Dendritic cell treated with granulocyte-macrophage colony-stimulating factor and Interleukin-4, amounts not matched to agents 40 ng/mL and 50 ng/mL, for 4 days (primary cell): ENCODE measurements at regions of chr19 and their contacts with region 1.

Region 1: DNA sequence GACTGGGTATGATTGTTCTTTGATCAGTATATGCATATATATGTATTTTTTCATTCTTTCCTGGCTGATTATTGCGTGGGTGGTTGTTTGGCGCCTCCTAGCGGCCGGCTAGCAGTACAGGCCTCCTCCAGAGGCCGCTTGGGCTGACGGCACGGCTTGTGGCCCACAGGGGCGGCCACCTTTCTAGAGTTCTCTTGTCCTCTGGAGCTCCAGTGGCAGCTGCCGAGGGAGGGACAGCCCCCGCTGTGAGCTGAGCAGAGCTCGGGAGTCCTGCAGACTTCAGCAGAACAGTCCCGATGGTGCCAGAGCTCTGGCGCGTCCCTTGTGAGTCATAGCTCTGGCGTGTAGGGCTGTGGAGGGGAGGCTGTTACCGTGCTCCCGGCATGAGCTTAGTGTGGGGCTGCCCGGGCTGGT is 22.5 kb upstream of the ZNF429 start:
- H3K4me3 Mint-ChIP-seq: no peak overlapping the region
- H3K27ac Mint-ChIP-seq: no peak overlapping the region
- H3K4me1 Mint-ChIP-seq: no peaks in the 10 kb centered on the region
- H3K27me3 Mint-ChIP-seq: no peaks in the 10 kb centered on the region

Region 2: DNA sequence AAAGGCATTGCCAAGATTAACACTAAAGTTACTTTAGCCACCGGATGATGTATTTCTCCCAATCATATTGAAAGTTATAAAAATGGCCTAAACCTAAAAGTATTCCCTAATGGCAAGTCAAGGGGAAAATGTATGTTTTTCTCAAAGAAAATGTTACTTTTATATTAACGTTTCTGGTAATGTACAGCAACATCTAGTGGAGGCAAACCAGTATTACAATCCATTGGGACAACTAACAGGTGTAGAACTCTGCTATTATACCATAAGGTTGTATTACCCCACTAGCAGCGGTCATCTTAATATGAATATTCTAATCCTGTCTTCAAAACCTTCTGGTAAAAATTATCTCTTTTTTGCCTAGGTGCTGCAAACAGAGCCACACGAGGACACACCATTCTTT is 215.3 kb after region 1 on chr19:
- intact Hi-C with region 1: loop called (anchors 5 kb)
- H3K4me3 Mint-ChIP-seq: no peak overlapping the region
- H3K27ac Mint-ChIP-seq: no peak overlapping the region
- H3K4me1 Mint-ChIP-seq: no peaks in the 10 kb centered on the region
- H3K27me3 Mint-ChIP-seq: no peaks in the 10 kb centered on the region